ENCODE measurements at regions of chr3 and their contacts with region 1.

Region 1: GRCh38 chr3:25648107-25648535 is 16.6 kb downstream of the TOP2B start:
- DNase-seq: peak; percentile 89
- H3K4me3 ChIP-seq: no peak overlapping the region
- H3K27ac ChIP-seq: peak overlapping the region; percentile 42
- H3K4me1 ChIP-seq: peaks cover 16% of the 10 kb centered on the region
- CTCF ChIP-seq: peak; percentile 98

Region 2: GRCh38 chr3:25664810-25665314 is 16.7 kb after region 1 on chr3 and contains the start of gene TOP2B:
- CTCF ChIA-PET with region 1: interaction called, 4 read pairs
- POLR2A ChIA-PET with region 1: interaction called, 43 read pairs
- intact Hi-C with region 1: no loop called
- DNase-seq: peak; percentile 97
- H3K4me3 ChIP-seq: peak within 1 kb of the TSS; percentile 90
- H3K27ac ChIP-seq: peak within 1 kb of the TSS; percentile 89
- H3K4me1 ChIP-seq: peaks cover 44% of the 10 kb centered on the region
- CTCF ChIP-seq: no peak
- total RNA-seq, gene TOP2B: 162 and 205 TPM in 2 replicates

Region 3: GRCh38 chr3:25723802-25724201 is 75.7 kb after region 1 on chr3:
- CTCF ChIA-PET with region 1: no interaction called
- POLR2A ChIA-PET with region 1: interaction called, 5 read pairs
- intact Hi-C with region 1: loop called (anchors 5 kb)
- DNase-seq: no peak
- H3K4me3 ChIP-seq: no peak overlapping the region
- H3K27ac ChIP-seq: no peak overlapping the region
- H3K4me1 ChIP-seq: no peaks in the 10 kb centered on the region
- CTCF ChIP-seq: no peak

Region 4: DNA sequence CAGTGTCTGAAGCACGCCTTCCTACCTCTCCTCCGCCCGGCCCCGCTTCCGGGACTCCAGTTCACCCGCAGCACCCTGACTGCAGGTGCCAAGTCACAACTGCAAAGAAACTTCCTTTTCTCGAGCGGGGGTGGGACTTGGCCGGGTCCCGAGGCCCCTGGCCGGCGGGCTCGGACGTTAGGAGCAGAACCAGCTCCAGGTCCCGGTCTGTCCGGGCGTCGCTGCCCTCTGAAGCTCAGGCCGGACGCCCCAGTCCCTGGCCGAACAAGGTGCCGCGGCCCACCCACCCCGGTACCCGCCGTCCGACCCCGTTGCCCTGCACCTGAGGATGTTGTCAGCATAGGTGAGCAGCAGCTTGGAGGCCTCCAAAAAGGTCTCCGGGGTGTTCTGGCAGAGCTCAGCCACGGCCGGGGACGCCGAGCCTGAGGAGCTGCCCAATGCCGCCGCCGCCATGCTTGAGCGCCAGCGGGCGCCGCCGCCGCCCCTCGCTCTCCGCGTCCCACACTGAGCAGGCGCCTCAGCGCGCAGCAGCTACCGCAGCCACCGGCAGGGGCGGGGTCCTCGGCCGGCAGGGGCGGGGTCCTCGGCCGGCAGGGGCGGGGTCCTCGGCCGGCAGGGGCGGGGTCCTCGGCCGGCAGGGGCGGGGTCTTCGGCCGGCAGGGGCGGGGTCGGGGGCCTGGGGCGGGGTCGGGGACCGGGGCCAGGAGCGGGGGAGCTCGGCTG is 135.0 kb after region 1 on chr3 and contains the start of gene NGLY1:
- CTCF ChIA-PET with region 1: no interaction called
- POLR2A ChIA-PET with region 1: no interaction called
- intact Hi-C with region 1: loop called (anchors 1 kb)
- DNase-seq: peak; percentile 91
- H3K4me3 ChIP-seq: peak within 1 kb of the TSS; percentile 90
- H3K27ac ChIP-seq: peak within 1 kb of the TSS; percentile 90
- H3K4me1 ChIP-seq: peaks cover 58% of the 10 kb centered on the region
- CTCF ChIP-seq: no peak
- total RNA-seq, gene NGLY1: 88.1 and 97.5 TPM in 2 replicates

Region 5: GRCh38 chr3:25831578-25831977 is 183.5 kb after region 1 on chr3:
- CTCF ChIA-PET with region 1: interaction called, 5 read pairs
- POLR2A ChIA-PET with region 1: interaction called, 3 read pairs
- intact Hi-C with region 1: loop called (anchors 2 kb)
- DNase-seq: peak; percentile 88
- H3K4me3 ChIP-seq: peak overlapping the region; percentile 45
- H3K27ac ChIP-seq: peak overlapping the region; percentile 81
- H3K4me1 ChIP-seq: peaks cover 68% of the 10 kb centered on the region
- CTCF ChIP-seq: peak; percentile 80

Region 6: DNA sequence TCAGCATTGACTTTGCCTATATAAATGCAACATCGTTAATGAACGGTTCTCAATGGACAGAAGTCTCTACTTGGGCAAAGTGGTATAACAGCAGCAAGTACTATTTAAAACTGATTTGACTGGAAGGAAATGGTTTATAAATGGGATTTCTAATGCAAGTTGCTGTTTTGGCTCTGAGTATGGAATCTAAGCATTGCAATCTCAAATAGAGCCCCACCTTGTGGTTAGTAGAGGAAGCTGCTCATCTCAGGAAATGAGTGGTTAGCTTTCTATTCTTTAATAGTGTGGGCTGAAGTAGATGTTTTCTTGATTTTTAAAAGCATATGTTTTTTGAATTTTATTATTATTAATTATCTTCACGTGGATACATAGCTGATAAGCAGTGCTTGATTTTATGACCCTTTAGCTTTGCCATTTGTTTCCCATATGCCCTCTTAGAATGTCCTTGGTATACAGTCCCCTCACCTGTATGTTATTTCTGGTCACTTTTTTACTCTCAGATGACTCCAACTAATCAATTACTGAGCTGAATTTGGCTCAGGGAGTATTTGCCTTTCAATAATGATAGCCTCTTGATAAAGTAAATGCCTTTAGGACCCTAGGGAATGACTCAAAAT is 208.9 kb after region 1 on chr3:
- CTCF ChIA-PET with region 1: interaction called, 4 read pairs
- POLR2A ChIA-PET with region 1: interaction called, 5 read pairs
- intact Hi-C with region 1: loop called (anchors 1 kb)
- DNase-seq: peak; percentile 75
- H3K4me3 ChIP-seq: no peak overlapping the region
- H3K27ac ChIP-seq: no peak overlapping the region
- H3K4me1 ChIP-seq: no peaks in the 10 kb centered on the region
- CTCF ChIP-seq: peak; percentile 97

Region 7: DNA sequence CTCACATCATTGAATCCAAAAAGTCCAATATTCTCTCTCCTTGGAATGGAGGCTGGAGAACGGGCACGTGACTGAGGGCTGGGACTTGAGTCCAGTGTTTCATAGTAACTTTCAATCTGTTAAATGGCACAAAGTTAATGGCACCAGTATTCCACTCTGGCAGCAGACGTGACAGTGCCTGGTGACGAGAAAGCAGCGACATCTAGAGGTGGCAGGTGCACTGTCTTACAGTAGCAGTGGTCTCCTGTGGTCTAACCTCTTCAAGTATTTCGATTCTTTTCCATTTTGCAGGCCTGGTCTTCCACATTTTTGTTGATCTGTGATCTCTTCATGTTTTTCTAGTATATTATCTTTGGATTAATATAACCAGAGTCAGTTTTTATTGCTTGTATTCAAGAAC is 248.9 kb after region 1 on chr3:
- CTCF ChIA-PET with region 1: no interaction called
- POLR2A ChIA-PET with region 1: no interaction called
- intact Hi-C with region 1: loop called (anchors 1 kb)
- DNase-seq: peak; percentile 71
- H3K4me3 ChIP-seq: no peak overlapping the region
- H3K27ac ChIP-seq: no peak overlapping the region
- H3K4me1 ChIP-seq: no peaks in the 10 kb centered on the region
- CTCF ChIP-seq: peak; percentile 96

Measured in OCI-LY7 (cell line).